Psoas muscle (tissue), 8 donors: ENCODE measurements at regions of chr20 and their contacts with region 1.

Region 1: GRCh38 chr20:39775110-39775509 is 813.0 kb downstream of the DHX35 start:
- DNase-seq: peak; percentile 79 to 89
- ATAC-seq: peak in 3 of 4 donors; percentile 46 to 61 (median 53)
- H3K4me3 ChIP-seq: no peak overlapping the region
- H3K27ac ChIP-seq: no peak overlapping the region
- H3K4me1 ChIP-seq: no peaks in the 10 kb centered on the region
- H3K27me3 ChIP-seq: no peaks in the 10 kb centered on the region
- CTCF ChIP-seq: no peak

Region 2: GRCh38 chr20:39691151-39691862 is 83.8 kb before region 1 on chr20:
- intact Hi-C with region 1: no loop called
- DNase-seq: no peak
- ATAC-seq: no peak
- H3K4me3 ChIP-seq: no peak overlapping the region
- H3K27ac ChIP-seq: no peak overlapping the region
- H3K4me1 ChIP-seq: no peaks in the 10 kb centered on the region
- H3K27me3 ChIP-seq: no peaks in the 10 kb centered on the region
- CTCF ChIP-seq: no peak

Region 3: GRCh38 chr20:39799366-39799965 is 24.4 kb after region 1 on chr20:
- intact Hi-C with region 1: loop called in 1 of 2 experiments (anchors 1 kb)
- DNase-seq: no peak
- ATAC-seq: no peak
- H3K4me3 ChIP-seq: no peak overlapping the region
- H3K27ac ChIP-seq: no peak overlapping the region
- H3K4me1 ChIP-seq: peaks cover 8% of the 10 kb centered on the region
- H3K27me3 ChIP-seq: no peaks in the 10 kb centered on the region
- CTCF ChIP-seq: no peak